AG04449 (cell line): ENCODE measurements at regions of chr17 and their contacts with region 1.

Region 1: DNA sequence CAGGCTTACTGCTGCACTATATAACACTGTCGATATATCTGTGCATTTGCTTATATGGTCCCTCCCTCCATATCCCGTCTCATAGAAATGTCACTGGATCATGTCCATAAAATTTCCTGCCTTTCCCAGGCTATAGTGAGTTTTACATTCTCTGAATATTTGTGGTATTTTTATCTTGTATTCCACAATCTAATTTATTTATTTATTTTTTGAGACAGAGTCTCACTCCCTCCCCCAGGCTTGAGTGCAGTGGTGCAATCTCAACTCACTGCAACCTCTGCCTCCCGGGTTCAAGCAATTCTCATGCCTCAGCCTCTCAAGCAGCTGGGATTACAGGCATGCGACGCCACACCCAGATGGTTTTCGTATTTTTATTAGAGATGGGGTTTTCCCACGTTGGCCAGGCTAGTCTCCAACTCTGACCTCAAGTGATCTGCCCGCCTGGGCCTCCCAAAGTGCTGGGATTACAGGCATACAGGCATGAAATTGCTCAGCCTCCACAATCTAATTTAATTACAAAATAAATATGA is 12.9 kb downstream of the TRIM37 start:
- DNase-seq: peak; percentile 94
- H3K4me3 ChIP-seq: no peak overlapping the region; the same call in 1 of the 2 replicates
- CTCF ChIP-seq: no peak

Region 2: GRCh38 chr17:58800240-58800908 is 293.4 kb before region 1 on chr17:
- CTCF ChIA-PET with region 1: no interaction called
- POLR2A ChIA-PET with region 1: no interaction called
- DNase-seq: no peak
- H3K4me3 ChIP-seq: no peak overlapping the region
- CTCF ChIP-seq: no peak

Region 3: GRCh38 chr17:59106463-59107305 is 12.9 kb after region 1 on chr17 and contains the start of gene TRIM37:
- CTCF ChIA-PET with region 1: interaction called, 11 read pairs
- POLR2A ChIA-PET with region 1: no interaction called
- DNase-seq: peak; percentile 87
- H3K4me3 ChIP-seq: peak within 1 kb of the TSS; percentile 90
- CTCF ChIP-seq: no peak